ENCODE measurements at regions of chr1 and their contacts with region 1.

Region 1: DNA sequence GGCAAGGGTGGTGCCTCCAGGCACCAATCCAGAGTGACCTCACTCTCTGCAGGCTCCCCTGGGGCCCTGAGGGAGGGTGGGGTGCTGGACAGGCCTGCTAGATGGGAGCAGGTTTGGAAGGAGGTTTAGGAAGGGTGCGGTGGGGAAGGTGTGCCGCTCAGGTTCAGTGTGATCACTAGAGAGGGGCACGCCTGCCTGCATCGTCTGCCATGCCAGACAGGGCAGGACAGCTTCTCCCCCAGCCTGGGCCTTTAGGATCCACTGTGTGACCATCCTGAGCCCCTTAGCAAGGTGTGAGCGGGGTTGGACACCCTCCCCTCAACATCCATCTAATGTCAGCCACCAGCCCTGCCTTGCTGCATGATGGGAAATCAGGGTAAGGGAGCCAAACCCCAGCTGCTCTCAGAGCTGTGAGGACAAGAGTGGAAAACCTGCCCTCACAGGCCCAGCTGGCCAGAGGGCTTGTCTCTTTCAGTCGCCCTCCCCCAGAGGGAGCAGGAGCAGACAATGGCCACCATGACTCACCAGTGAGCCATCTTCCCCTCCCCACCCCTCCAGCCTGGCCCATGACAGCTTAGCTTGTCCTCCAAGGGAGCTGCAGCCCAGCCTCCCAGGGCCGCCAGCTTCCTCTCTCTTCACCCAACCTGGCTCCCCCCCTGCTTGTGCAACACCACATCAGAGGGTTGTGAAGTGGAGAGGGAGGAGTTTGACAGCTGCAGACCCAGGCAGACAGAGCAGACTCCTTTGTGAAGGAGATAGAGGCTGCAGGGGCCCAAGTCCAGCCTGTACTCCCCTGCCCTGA is 37.0 kb downstream of the NUAK2 start:
- DNase-seq: peak; percentile 96
- H3K4me3 Mint-ChIP-seq: peak overlapping the region; percentile 62
- H3K27ac Mint-ChIP-seq: peak overlapping the region; percentile 91
- H3K4me1 Mint-ChIP-seq: peaks cover 79% of the 10 kb centered on the region
- H3K27me3 Mint-ChIP-seq: peaks cover 6% of the 10 kb centered on the region

Region 2: GRCh38 chr1:205183676-205184335 is 100.7 kb before region 1 on chr1:
- intact Hi-C with region 1: no loop called
- DNase-seq: no peak
- H3K4me3 Mint-ChIP-seq: peak overlapping the region; percentile 27
- H3K27ac Mint-ChIP-seq: peak overlapping the region; percentile 44
- H3K4me1 Mint-ChIP-seq: peaks cover 49% of the 10 kb centered on the region
- H3K27me3 Mint-ChIP-seq: no peaks in the 10 kb centered on the region

Region 3: DNA sequence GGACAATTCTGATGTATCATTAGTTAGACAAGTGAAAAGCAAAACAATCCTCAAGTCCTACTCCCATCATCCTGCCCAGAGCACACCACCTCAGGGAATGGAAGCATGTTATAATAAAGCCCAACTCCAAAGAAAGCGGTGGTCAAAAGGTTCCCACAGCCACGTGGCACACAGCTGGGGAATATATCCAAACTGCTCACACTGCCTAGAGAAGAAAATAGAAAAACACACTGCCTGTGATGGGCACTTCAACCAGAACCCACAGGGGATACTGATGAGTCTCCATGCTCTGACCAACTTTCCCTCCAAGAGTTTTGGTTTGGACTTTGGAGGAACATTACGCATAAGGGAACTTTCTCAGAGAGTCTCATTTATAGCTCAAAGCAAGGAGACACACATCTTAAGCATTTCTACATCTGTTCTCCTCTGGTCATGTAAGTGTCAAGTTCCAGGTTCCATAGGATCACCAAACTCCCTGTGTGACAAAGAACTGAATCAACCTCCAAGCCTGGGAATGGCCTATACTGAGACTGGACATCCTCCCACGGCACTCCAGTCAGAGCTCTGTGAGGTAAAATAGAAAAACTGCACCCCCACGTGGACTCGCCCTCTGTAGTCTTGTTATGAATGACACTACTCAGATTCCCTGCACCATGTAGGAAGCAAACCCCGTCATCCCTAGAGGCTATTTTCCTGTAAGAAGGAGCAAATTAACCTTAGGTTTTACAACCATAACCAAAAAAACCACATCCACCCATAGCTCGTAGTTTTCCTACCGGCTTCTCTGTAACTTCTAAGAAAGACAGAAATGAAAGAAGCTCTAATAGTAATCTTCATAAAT is 85.2 kb before region 1 on chr1:
- intact Hi-C with region 1: loop called (anchors 2 kb)
- DNase-seq: peak; percentile 78
- H3K4me3 Mint-ChIP-seq: peak overlapping the region; percentile 66
- H3K27ac Mint-ChIP-seq: peak overlapping the region; percentile 85
- H3K4me1 Mint-ChIP-seq: peaks cover 50% of the 10 kb centered on the region
- H3K27me3 Mint-ChIP-seq: no peaks in the 10 kb centered on the region

Region 4: GRCh38 chr1:205227584-205228006 is 56.9 kb before region 1 on chr1 and contains the start of gene TMCC2:
- intact Hi-C with region 1: loop called (anchors 2 kb)
- DNase-seq: peak; percentile 95
- H3K4me3 Mint-ChIP-seq: peak within 1 kb of the TSS; percentile 91
- H3K27ac Mint-ChIP-seq: peak within 1 kb of the TSS; percentile 86
- H3K4me1 Mint-ChIP-seq: peaks cover 42% of the 10 kb centered on the region
- H3K27me3 Mint-ChIP-seq: peaks cover 31% of the 10 kb centered on the region
- total RNA-seq, gene TMCC2: 19.9 and 20.9 TPM in 2 replicates

Region 5: GRCh38 chr1:205313563-205314308 is 29.2 kb after region 1 on chr1:
- intact Hi-C with region 1: loop called (anchors 1 kb)
- DNase-seq: peak; percentile 82
- H3K4me3 Mint-ChIP-seq: peak overlapping the region; percentile 85
- H3K27ac Mint-ChIP-seq: peak overlapping the region; percentile 89
- H3K4me1 Mint-ChIP-seq: peaks cover 64% of the 10 kb centered on the region
- H3K27me3 Mint-ChIP-seq: no peaks in the 10 kb centered on the region

Region 6: DNA sequence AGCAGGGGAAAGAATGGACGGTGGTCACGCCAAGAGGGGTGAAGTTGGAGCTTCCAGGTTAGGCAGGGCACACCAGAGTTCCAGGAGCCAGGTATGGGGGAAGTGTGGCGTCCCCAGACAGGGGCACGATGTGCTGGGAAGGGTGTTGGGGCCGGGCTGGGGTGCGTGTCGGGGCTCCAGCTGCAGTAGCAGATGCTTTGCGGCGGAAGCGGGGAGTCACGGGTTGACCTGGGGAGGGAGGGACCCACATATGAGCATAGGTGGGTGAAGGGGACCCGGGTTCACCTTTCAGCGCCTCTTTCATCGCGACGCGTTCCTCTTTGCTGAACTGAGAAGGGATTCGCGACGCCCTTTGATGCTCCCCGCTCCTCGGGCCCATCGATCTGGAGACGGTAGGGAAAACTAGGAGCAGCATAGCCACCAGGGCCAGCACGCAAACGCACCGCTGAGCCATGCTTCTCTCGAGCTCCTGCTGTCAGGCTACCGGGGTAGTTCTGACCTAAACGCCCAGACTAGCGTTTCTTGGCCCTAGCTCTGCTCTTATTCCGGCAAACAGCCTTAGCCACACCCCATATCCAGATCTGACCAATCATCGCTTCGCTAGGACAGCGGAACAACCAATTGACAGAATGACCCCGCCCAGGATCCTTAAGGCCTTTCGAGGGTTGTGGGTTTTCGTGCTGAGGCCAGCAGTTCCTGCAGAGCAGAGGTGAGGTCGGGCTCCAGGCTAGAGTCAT is 565.2 kb after region 1 on chr1 and contains the start of gene PM20D1:
- intact Hi-C with region 1: loop called (anchors 5 kb)
- DNase-seq: peak; percentile 97
- H3K4me3 Mint-ChIP-seq: peak within 1 kb of the TSS; percentile 93
- H3K27ac Mint-ChIP-seq: peak within 1 kb of the TSS; percentile 87
- H3K4me1 Mint-ChIP-seq: peaks cover 21% of the 10 kb centered on the region
- H3K27me3 Mint-ChIP-seq: peaks cover 6% of the 10 kb centered on the region
- total RNA-seq, gene PM20D1: 0.16 and 0.71 TPM in 2 replicates